Dendritic cell treated with granulocyte-macrophage colony-stimulating factor and Interleukin-4, amounts not matched to agents 40 ng/mL and 50 ng/mL, for 4 days (primary cell): ENCODE measurements at regions of chr2 and their contacts with region 1.

Region 1: DNA sequence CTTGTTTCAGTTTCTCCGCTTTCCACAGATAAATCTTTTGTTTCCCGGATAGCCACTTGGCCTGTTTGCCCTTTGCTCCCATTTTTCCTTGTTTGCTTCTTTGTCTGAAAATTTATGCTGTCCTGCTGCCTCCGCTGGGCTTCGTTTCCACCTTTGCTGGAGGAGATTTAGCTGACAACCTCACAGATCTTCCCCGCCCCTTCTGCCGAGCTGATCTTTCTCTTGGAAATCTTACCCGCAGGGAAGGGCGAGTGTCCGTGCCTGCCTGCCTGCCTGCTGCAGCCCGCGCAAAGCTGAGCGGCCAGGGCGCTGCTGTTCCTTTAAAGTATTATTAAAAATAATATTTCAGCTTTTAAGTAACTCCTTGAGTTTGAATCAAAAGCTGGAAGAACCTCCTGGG is 1.4 kb upstream of the XRCC5 start:
- H3K4me3 Mint-ChIP-seq: no peak overlapping the region
- H3K27ac Mint-ChIP-seq: no peak overlapping the region
- H3K4me1 Mint-ChIP-seq: peaks cover 27% of the 10 kb centered on the region
- H3K27me3 Mint-ChIP-seq: peaks cover 10% of the 10 kb centered on the region

Region 2: DNA sequence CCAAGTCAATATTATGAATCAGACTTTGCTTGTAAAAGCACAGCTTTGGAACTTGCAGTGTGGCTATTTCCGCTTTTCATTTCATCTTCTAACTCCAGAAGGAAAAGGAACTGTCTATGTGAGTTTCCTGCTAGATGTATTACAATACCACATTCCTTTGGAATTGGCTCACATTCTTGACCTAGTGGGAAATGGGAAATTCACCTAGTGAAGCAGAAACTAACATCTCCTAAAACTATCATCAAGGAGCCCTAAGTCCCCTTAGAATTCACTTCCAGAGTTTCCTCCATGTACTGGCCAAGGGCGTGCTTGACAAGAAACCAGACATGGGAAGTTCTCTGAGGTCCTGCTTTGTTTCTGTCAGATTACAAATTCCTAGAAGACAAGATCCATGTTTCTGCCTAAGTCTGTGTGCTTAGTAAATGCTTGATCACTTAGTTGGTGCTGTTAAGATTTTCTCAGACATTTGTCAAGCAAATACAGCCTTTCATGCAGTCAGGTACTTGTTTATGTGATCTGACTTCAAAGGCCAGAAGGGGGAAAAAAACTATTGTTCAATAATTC is 396.2 kb before region 1 on chr2:
- intact Hi-C with region 1: no loop called
- H3K4me3 Mint-ChIP-seq: no peak overlapping the region
- H3K27ac Mint-ChIP-seq: peak overlapping the region; percentile 85
- H3K4me1 Mint-ChIP-seq: peaks cover 78% of the 10 kb centered on the region
- H3K27me3 Mint-ChIP-seq: peaks cover 2% of the 10 kb centered on the region

Region 3: DNA sequence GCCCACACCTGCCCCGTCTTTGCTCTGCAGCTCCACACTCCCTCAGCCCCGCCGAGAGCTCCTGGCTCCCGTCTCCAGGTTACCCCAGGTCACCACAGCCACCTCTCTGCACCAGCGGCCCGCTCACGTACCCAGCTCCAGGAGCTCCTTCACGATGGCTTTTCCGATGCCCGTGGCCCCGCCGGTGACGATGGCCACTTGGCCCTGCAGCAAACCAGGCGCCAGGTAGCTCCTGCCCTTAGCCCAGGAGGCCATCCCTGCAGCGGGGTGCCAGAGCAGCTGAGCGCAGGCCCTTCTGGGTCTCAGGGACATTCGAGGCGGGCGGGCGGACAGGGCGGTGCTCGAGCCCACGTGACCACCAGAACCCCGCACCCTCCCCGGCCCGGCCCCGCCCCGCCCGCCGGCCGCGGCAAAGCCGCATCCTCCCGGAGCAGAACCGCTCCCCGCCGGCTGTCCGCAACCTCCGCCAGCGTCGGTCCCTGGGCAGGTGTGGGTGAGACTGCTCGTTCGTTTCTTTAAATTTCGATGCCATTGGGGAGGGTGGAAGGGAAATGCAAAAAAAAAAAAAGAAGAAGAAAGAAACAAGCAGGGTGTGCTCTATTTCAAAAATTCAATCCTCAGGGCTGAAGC is 26.2 kb before region 1 on chr2 and contains the starts of genes PECR and TMEM169:
- intact Hi-C with region 1: loop called (anchors 2 kb)
- H3K4me3 Mint-ChIP-seq: peak within 1 kb of the TSS; percentile 91
- H3K27ac Mint-ChIP-seq: peak within 1 kb of the TSS; percentile 77
- H3K4me1 Mint-ChIP-seq: peaks cover 27% of the 10 kb centered on the region
- H3K27me3 Mint-ChIP-seq: peaks cover 8% of the 10 kb centered on the region